ENCODE measurements at regions of chr18 and their contacts with region 1.

Region 1: DNA sequence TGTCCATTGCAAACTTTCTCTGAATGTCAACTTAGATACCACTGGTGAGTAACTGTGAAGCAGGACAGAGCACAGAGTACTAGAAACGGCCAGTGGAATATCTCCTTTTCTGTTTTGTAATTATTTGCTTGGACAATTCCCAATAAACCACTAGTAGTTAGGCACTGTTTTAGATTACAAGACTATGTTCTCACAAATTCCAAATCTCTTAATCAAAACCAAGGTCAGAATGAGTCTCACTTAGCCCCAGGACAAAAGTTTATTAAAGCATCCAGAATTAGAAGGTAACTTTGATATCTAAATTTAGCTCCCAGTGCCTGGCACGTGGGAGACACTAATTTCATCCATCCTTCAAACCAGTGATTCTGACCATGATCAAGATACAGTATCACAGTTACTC is 89.0 kb downstream of the ZNF521 start:
- DNase-seq: no peak
- H3K4me3 ChIP-seq: no peak overlapping the region
- H3K27ac ChIP-seq: no peak overlapping the region
- H3K4me1 ChIP-seq: no peaks in the 10 kb centered on the region
- H3K27me3 ChIP-seq: no peaks in the 10 kb centered on the region

Region 2: GRCh38 chr18:25190472-25190871 is 72.4 kb before region 1 on chr18:
- CTCF ChIA-PET with region 1: no interaction called
- POLR2A ChIA-PET with region 1: no interaction called
- DNase-seq: peak in 2 of 3 donors; percentile 39 to 57
- H3K4me3 ChIP-seq: no peak overlapping the region
- H3K27ac ChIP-seq: no peak overlapping the region
- H3K4me1 ChIP-seq: peaks cover 0 to 14% (median 6%) of the 10 kb centered on the region in 4 experiments
- H3K27me3 ChIP-seq: no peaks in the 10 kb centered on the region

Region 3: DNA sequence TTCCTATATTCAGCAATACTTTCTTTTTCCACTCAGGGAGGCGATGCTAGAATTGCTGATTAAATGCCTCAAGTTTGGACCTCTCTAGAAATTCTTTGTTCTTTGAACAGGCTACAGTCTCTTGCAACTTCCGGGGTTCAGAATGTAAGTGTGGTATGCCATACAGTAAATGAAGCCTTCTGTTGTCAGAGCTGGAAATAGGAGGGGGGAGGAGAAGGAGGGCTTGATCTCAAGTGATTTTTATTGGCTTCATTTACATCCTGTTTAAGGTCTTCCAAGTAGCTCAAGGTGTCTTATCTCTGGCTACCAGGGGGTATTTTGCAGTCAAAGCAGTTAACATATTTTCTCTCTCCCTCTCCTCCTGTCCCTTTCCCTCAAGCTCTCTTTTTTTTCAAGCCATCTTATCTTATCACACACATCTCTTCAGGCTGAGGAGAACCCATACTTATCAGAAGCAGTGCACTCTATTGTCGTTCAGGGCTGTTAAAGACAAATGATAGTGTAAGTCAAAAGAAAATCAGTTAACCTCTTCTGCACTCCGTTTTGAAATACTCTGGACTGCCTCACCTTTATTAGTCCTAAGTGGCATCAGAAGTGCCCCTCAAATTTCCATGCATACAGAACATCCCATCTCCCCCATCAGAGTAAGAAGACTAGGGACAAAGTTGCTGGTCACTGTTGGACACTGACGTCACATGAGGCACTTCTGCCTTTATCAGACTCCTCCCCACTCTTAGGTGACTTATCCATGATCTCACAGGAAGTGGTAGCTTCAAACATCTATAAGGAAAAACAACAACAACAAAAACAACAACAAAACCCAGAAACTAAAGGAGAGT is 23.1 kb before region 1 on chr18:
- CTCF ChIA-PET with region 1: interaction called, 11 read pairs
- POLR2A ChIA-PET with region 1: no interaction called
- DNase-seq: peak; percentile 68 to 95 (median 91)
- H3K4me3 ChIP-seq: peak overlapping the region in 4 of 7 experiments; percentile 21 to 55 (median 42)
- H3K27ac ChIP-seq: peak overlapping the region; percentile 53 to 81
- H3K4me1 ChIP-seq: peaks cover 24 to 72% (median 56%) of the 10 kb centered on the region in 4 experiments
- H3K27me3 ChIP-seq: no peaks in the 10 kb centered on the region

Region 4: GRCh38 chr18:25351777-25352628 is 89.1 kb after region 1 on chr18 and contains the start of gene ZNF521:
- CTCF ChIA-PET with region 1: no interaction called
- POLR2A ChIA-PET with region 1: no interaction called
- DNase-seq: peak; percentile 95 to 99 (median 98)
- H3K4me3 ChIP-seq: peak within 1 kb of the TSS; percentile 67 to 98 (median 91)
- H3K27ac ChIP-seq: peak within 1 kb of the TSS; percentile 89 to 92
- H3K4me1 ChIP-seq: peaks cover 6 to 31% (median 17%) of the 10 kb centered on the region in 4 experiments
- H3K27me3 ChIP-seq: no peaks in the 10 kb centered on the region

Measured in common myeloid progenitor, CD34-positive (primary cell).